ENCODE measurements at regions of chr6 and their contacts with region 1.

Region 1: DNA sequence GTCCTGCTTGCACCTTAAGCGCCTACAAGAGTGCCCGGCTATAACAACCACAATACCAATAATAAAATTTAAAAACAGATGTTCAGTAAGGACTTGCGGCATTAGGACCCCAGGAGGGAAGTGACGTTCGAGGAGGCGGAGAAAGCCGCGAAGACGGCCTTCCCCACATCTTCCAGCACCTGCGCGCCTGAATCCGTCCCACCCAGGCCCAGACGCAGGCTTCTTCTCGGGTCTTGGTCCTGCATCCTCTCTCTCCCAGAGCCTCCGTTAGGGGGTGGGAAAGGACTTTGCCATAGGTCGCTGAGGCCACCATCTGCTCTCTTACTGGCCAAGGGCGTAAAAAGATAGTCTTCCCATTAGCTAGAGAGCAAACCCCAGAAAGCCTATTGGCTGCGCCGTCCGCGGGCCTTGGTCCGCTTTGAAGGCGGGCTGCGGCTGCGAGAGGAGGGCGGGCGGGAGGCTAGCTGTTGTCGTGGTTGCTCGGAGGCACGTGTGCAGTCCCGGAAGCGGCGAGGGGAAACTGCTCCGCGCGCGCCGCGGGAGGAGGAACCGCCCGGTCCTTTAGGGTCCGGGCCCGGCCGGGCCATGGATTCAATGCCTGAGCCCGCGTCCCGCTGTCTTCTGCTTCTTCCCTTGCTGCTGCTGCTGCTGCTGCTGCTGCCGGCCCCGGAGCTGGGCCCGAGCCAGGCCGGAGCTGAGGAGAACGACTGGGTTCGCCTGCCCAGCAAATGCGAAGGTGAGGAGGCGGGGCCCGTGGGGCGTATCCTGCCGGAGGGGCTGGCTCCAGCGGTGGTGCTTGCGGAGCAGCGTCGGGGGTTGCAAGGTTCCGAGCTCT is at the start of gene CNPY3:
- DNase-seq: peak; percentile 98
- H3K4me3 ChIP-seq: peak within 1 kb of the TSS; percentile 84
- H3K27ac ChIP-seq: peak within 1 kb of the TSS; percentile 94
- H3K4me1 ChIP-seq: peaks cover 33% of the 10 kb centered on the region
- CTCF ChIP-seq: no peak
- total RNA-seq, gene CNPY3: 64.7 and 69.3 TPM in 2 replicates

Region 2: DNA sequence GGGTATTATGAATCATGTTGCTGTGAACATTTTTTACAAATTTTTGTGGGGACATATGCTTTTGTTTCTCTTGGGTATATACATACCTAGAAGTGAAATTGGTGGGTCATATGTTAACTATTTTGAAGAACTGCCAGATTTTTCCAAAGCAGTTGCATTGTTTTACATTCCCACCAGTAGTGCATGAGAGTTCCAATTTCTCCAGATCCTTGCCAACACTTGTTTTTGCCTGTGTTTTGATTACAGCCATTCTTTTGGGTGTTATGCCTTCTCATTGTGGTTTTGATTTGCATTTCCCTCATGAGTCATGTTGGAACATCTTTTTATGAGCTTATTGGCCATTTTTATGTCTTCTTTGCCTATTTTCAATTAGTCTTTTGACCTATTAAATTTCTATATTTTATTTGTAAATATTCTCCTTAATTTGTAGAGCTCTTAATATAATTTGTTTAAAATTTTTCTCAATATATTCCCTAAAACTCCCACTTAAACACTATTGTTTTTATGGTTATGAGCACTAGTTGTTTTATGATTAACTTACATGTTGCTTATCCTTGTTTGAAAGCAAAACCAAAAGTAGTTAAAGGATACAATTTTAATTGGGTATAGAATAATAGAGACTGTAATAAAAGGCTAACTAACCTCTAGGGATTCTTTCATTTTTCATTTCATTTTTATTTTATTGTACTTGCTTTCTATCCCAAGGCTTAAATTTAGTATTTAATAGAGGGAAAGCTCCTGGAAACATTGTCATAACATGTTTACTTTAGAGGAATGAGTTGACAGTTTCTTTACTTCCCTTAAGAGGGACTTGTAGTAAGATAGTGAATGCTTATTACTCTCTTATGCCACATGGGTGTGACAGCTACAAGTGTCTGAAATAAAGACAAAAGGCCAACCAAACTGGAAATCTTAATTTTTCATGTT is 359.8 kb before region 1 on chr6:
- CTCF ChIA-PET with region 1: interaction called, 10 read pairs
- POLR2A ChIA-PET with region 1: interaction called, 3 read pairs
- intact Hi-C with region 1: no loop called
- DNase-seq: no peak
- H3K4me3 ChIP-seq: no peak overlapping the region
- H3K27ac ChIP-seq: peak overlapping the region; percentile 26
- H3K4me1 ChIP-seq: peaks cover 49% of the 10 kb centered on the region
- CTCF ChIP-seq: peak; percentile 28; the same call in 1 of the 2 replicates

Region 3: GRCh38 chr6:42819803-42820511 is 109.2 kb before region 1 on chr6:
- CTCF ChIA-PET with region 1: no interaction called
- POLR2A ChIA-PET with region 1: no interaction called
- intact Hi-C with region 1: no loop called
- DNase-seq: peak; percentile 41
- H3K4me3 ChIP-seq: no peak overlapping the region
- H3K27ac ChIP-seq: no peak overlapping the region
- H3K4me1 ChIP-seq: peaks cover 5% of the 10 kb centered on the region
- CTCF ChIP-seq: peak; percentile 51

Region 4: DNA sequence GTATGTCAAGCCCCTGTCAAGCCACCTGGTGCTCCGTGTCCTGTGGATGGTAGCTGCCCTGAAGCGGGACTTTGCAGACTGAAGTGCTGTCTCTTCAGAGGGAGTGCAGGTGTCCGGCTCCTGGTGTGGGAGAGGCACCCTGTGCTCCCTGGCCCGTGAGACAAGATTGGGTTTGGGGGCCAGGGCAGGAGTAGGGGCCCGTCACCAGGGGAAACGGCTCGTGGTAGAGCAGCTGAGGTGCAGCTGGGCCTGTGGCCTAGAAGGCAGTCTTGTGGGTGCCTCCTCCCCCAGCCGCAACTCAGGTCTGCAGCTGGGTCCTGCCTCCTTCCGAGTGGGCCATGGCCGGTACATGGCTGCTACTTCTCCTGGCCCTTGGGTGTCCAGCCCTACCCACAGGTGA is 13.5 kb before region 1 on chr6 and contains the start of gene PTCRA:
- CTCF ChIA-PET with region 1: no interaction called
- POLR2A ChIA-PET with region 1: interaction called, 17 read pairs
- intact Hi-C with region 1: no loop called
- DNase-seq: peak; percentile 84
- H3K4me3 ChIP-seq: no peak within 1 kb of the TSS
- H3K27ac ChIP-seq: peak within 1 kb of the TSS; percentile 42
- H3K4me1 ChIP-seq: peaks cover 15% of the 10 kb centered on the region
- CTCF ChIP-seq: no peak
- total RNA-seq, gene PTCRA: 0.72 and 0.85 TPM in 2 replicates

Region 5: DNA sequence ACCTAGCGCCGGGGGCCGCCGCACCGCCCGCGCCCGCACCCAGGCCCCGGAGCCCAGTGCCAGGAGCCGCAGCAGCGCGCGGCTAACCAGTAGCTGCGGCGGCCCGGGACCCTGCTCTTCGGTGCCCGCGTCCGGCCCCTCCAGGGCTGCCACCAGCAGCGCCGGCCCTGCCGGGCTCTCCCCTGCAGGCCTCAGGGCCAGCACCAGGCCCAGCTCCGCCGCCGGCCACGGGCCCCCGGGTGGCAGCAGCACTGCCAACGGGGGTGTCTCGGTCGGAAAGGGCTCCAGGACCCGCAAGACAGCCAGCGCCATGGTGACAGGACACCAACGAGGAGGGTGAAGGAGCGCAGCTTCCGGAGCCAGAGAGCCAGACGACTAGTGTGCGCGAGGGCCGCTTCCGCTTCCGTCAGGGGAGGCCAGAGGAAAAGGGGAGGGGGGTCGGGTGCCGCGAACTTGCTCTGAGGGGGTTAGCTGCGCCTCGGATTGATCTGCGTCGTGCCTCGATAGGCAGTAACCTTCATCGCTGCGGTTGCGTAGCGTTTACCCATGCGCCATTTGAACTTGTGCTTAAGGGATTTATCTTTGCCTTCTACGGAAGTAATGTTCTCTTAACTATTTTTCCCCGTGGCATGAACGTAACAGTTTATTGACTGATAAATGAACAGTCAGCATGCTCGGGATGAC is 49.8 kb after region 1 on chr6 and contains the start of gene PEX6:
- CTCF ChIA-PET with region 1: no interaction called
- POLR2A ChIA-PET with region 1: interaction called, 18 read pairs
- intact Hi-C with region 1: loop called (anchors 1 kb)
- DNase-seq: peak; percentile 96
- H3K4me3 ChIP-seq: peak within 1 kb of the TSS; percentile 88
- H3K27ac ChIP-seq: peak within 1 kb of the TSS; percentile 50
- H3K4me1 ChIP-seq: peaks cover 28% of the 10 kb centered on the region
- CTCF ChIP-seq: no peak
- total RNA-seq, gene PEX6: 24.7 and 26.3 TPM in 2 replicates

Region 6: GRCh38 chr6:42984001-42984923 is 55.1 kb after region 1 on chr6 and contains the start of gene PPP2R5D:
- CTCF ChIA-PET with region 1: no interaction called
- POLR2A ChIA-PET with region 1: interaction called, 18 read pairs
- intact Hi-C with region 1: loop called (anchors 1 kb)
- DNase-seq: peak; percentile 99
- H3K4me3 ChIP-seq: peak within 1 kb of the TSS; percentile 88
- H3K27ac ChIP-seq: peak within 1 kb of the TSS; percentile 35
- H3K4me1 ChIP-seq: peaks cover 24% of the 10 kb centered on the region
- CTCF ChIP-seq: no peak
- total RNA-seq, gene PPP2R5D: 29.1 and 35.0 TPM in 2 replicates

Region 7: GRCh38 chr6:43013843-43014433 is 84.7 kb after region 1 on chr6 and contains the starts of genes KLHDC3 and MEA1:
- CTCF ChIA-PET with region 1: no interaction called
- POLR2A ChIA-PET with region 1: interaction called, 9 read pairs
- intact Hi-C with region 1: loop called (anchors 1 kb)
- DNase-seq: peak; percentile 100
- H3K4me3 ChIP-seq: peak within 1 kb of the TSS; percentile 86
- H3K27ac ChIP-seq: peak within 1 kb of the TSS; percentile 43
- H3K4me1 ChIP-seq: peaks cover 31% of the 10 kb centered on the region
- CTCF ChIP-seq: no peak
- total RNA-seq, gene KLHDC3: 78.6 and 89.9 TPM in 2 replicates
- total RNA-seq, gene MEA1: 70.7 and 76.0 TPM in 2 replicates

Region 8: GRCh38 chr6:43355862-43356590 is 426.8 kb after region 1 on chr6:
- CTCF ChIA-PET with region 1: interaction called, 14 read pairs
- POLR2A ChIA-PET with region 1: no interaction called
- intact Hi-C with region 1: no loop called
- DNase-seq: peak; percentile 27
- H3K4me3 ChIP-seq: no peak overlapping the region
- H3K27ac ChIP-seq: no peak overlapping the region
- H3K4me1 ChIP-seq: no peaks in the 10 kb centered on the region
- CTCF ChIP-seq: peak; percentile 70